BJ (cell line): ENCODE measurements at regions of chr12 and their contacts with region 1.

Region 1: GRCh38 chr12:27924350-27925135 is 48.0 kb downstream of the PTHLH start:
- DNase-seq: no peak
- H3K4me3 ChIP-seq: no peak overlapping the region
- H3K27me3 ChIP-seq: no peaks in the 10 kb centered on the region; the same call in 1 of the 2 replicates
- CTCF ChIP-seq: no peak

Region 2: DNA sequence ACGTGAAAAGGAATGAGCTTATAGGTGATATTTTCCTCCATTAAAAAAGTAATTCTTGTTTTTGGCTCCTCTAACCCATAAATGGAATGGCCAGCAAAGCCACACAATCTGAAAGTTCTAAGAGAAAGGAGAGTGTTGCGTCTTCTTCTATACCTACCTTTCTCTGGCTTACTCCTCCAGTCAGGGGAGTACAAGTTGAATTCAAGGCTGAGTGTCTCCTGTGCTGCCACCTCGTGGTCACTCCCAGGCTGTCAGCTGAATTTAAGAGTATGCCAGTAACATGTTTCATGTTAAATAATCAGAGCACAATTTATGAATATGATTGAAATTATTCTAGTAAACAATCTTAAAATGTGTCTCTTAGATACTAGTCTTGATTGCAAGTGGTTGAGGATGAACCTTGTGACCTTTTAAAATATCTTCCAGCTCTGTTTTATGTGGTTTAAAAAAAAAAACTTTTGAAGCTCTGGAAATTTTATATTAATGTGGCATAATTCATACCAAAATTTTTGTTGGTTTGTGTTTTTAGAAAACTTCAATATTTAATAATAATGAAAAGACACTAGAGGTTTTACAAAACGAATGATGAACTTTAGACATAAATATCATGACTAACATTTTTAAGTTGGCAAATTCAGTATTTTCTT is 16.3 kb after region 1 on chr12:
- CTCF ChIA-PET with region 1: interaction called, 17 read pairs
- POLR2A ChIA-PET with region 1: no interaction called
- DNase-seq: no peak
- H3K4me3 ChIP-seq: no peak overlapping the region
- H3K27me3 ChIP-seq: no peaks in the 10 kb centered on the region
- CTCF ChIP-seq: peak; percentile 86